Activated CD4-positive, alpha-beta T cell treated with anti-CD3 and anti-CD28 coated beads, Interleukin-2, amount 10 ng/mL, durations not matched to agents 24 days and 14 days (primary cell): ENCODE measurements at regions of chr7 and their contacts with region 1.

Region 1: DNA sequence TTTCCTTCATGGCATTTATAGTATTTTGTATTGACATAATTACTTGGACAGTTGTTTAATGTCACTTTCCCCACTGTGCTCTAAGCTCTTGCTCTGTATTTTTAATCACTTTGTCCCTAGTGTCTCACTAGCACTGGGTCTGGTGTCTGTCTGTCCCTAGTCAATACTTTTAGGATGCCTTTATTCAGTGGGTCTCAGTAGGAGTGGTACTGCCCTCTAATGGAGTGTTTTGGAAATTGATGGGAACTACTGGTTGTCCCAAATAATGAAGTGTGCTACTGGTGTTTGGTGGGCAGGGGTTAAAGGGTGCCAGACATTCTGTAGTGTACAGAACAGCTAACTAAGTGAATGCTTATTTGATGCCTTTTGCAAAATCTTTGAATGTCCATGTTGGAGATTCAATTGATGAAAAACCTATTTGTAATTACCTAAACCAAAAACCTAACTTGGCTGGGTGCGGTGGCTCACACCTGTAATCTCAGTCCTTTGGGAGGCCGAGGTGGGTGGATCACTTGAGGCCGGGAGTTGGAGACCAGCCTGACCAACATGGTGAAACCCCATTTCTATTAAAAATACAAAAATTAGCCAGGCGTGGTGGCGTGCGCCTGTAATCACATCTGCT is 33.3 kb downstream of the CDK14 start:
- DNase-seq: peak; percentile 58
- H3K4me3 Mint-ChIP-seq: no peak overlapping the region
- H3K27ac Mint-ChIP-seq: no peak overlapping the region
- H3K4me1 Mint-ChIP-seq: no peaks in the 10 kb centered on the region
- H3K27me3 Mint-ChIP-seq: no peaks in the 10 kb centered on the region

Region 2: GRCh38 chr7:90455163-90456030 is 174.0 kb before region 1 on chr7:
- intact Hi-C with region 1: loop called (anchors 1 kb)
- DNase-seq: peak; percentile 69
- H3K4me3 Mint-ChIP-seq: no peak overlapping the region
- H3K27ac Mint-ChIP-seq: no peak overlapping the region
- H3K4me1 Mint-ChIP-seq: peaks cover 5% of the 10 kb centered on the region
- H3K27me3 Mint-ChIP-seq: peaks cover 13% of the 10 kb centered on the region

Region 3: DNA sequence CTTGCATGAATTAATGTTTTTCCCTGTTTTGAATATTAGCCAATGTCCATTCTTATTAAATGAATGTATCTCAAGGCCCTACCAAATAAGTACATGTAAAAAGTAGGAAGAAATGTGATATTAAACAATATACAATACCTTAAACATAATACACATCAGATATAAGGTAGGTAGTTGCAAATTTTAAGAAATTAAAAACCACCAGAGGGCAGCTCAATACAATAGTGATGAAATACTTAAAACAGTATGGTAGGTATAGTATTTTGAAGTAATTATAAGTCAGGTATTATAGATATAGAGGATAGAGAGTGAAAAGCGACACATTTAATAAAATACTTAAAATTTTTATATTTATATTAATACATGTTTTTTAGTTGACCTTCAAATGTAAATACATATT is 76.9 kb before region 1 on chr7:
- intact Hi-C with region 1: loop called (anchors 5 kb)
- DNase-seq: no peak
- H3K4me3 Mint-ChIP-seq: no peak overlapping the region
- H3K27ac Mint-ChIP-seq: no peak overlapping the region
- H3K4me1 Mint-ChIP-seq: no peaks in the 10 kb centered on the region
- H3K27me3 Mint-ChIP-seq: peaks cover 2% of the 10 kb centered on the region

Region 4: DNA sequence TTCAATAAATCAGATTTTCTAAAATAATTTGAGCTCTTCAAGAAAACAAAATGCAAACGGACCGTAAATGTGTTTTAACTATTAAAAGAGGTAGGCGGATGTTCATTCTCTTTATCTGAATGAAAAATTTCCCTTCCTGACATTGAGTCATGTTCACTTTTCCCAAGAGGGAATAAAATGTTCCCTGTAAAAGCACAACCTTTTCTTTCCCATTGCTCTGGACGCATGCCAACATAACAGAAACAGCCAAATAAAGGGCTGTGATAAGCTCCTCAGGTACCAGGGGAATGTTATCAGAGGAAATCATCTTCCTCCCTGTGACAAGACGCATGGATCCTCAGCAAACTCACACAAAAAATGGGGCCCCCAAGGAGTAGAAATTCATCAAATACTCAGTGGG is 999.3 kb after region 1 on chr7:
- intact Hi-C with region 1: no loop called
- DNase-seq: no peak
- H3K4me3 Mint-ChIP-seq: no peak overlapping the region
- H3K27ac Mint-ChIP-seq: no peak overlapping the region
- H3K4me1 Mint-ChIP-seq: no peaks in the 10 kb centered on the region
- H3K27me3 Mint-ChIP-seq: no peaks in the 10 kb centered on the region